B cell (primary cell): ENCODE measurements at regions of chr11 and their contacts with region 1.

Region 1: GRCh38 chr11:61071208-61071681 is 31.0 kb upstream of the CD5 start:
- DNase-seq: peak; percentile 61
- ATAC-seq: peak; percentile 50
- H3K4me3 ChIP-seq: peak overlapping the region in 1 of 5 experiments; percentile 15
- H3K4me3 Mint-ChIP-seq: peak overlapping the region; percentile 68
- H3K27ac ChIP-seq: peak overlapping the region; percentile 91 to 98
- H3K27ac Mint-ChIP-seq: peak overlapping the region; percentile 97
- H3K4me1 ChIP-seq: peaks cover 40 to 49% of the 10 kb centered on the region in 2 donors
- H3K4me1 Mint-ChIP-seq: peaks cover 71% of the 10 kb centered on the region
- H3K27me3 ChIP-seq: no peaks in the 10 kb centered on the region
- H3K27me3 Mint-ChIP-seq: no peaks in the 10 kb centered on the region
- CTCF ChIP-seq: no peak

Region 2: DNA sequence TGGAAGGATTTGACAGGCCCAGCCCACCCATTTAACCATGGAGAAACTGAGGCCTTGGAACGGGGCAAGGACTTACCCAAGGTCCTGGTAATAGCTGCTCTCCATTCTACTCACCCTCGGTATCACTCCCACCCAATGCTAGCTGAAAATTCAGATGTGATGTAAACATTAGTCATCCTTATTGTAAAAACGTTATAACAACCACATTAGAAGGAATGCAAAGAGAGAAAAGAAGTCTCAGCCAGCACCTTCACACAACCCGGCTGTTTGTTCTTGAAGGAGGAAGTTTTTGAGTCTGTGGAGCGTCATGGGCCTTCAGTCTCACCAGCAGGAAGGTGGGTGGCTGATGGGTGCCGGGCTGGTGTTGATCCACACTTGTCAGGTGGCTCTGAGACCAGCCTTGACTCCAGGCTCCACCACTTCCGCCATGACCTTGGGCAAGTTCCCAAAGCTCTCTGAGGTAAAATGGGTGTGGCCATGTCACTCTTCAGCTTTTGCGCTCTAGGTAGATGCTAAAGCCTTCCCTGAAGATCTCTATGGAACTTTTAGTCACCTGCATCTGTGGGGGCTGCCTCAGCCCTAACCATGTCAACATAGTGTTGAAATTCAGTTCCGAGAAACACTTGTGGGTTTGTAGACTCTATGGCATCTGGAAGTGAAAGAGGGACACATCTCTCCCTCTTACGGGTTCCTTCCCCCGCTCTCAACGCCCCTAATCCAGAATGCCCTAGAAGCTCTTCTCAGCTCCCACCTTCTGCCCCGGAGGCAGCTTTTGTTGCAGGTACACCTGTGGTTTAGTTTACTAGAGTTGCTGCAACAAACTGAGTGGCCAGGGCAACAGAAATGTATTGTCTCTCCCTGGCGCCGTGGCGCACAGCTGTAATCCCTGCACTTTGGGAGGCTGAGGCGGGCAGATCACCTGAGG is 85.0 kb before region 1 on chr11:
- CTCF ChIA-PET with region 1: no interaction called
- POLR2A ChIA-PET with region 1: no interaction called
- intact Hi-C with region 1: no loop called
- DNase-seq: peak; percentile 65
- ATAC-seq: peak; percentile 63
- H3K4me3 ChIP-seq: peak overlapping the region in 1 of 5 experiments; percentile 3
- H3K4me3 Mint-ChIP-seq: peak overlapping the region; percentile 21
- H3K27ac ChIP-seq: peak overlapping the region; percentile 61 to 71
- H3K27ac Mint-ChIP-seq: peak overlapping the region; percentile 86
- H3K4me1 ChIP-seq: peaks cover 23 to 42% of the 10 kb centered on the region in 2 donors
- H3K4me1 Mint-ChIP-seq: peaks cover 42% of the 10 kb centered on the region
- H3K27me3 ChIP-seq: no peaks in the 10 kb centered on the region
- H3K27me3 Mint-ChIP-seq: no peaks in the 10 kb centered on the region
- CTCF ChIP-seq: no peak

Region 3: DNA sequence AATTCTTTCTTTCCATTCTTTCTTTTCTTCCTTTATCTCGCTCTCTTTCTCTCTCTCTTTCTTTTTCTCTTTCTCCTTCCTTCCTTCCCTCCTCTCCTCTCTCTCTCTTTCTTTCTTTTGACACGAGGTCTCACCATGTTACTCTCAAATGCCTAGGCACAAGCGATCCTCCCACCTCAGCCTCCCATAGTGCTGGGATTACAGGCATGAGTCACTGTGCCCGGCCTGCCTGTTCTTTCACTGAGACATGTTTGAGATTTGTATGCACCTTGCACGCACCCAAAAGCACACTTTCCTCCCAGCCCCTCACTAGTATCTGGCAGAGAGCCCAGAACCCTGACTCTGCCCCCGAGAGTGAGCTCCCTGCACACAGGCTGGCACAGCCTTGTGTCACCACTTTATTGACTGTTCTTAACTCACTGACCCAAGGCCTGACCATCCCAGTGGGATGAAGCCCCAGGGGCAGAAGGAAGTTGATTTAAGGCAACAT is 42.9 kb before region 1 on chr11:
- CTCF ChIA-PET with region 1: interaction called, 3 read pairs
- POLR2A ChIA-PET with region 1: no interaction called
- intact Hi-C with region 1: loop called (anchors 1 kb)
- DNase-seq: peak; percentile 62
- ATAC-seq: peak; percentile 88
- H3K4me3 ChIP-seq: no peak overlapping the region
- H3K4me3 Mint-ChIP-seq: peak overlapping the region; percentile 67
- H3K27ac ChIP-seq: no peak overlapping the region
- H3K27ac Mint-ChIP-seq: peak overlapping the region; percentile 76
- H3K4me1 ChIP-seq: peaks cover 40 to 45% of the 10 kb centered on the region in 2 donors
- H3K4me1 Mint-ChIP-seq: peaks cover 48% of the 10 kb centered on the region
- H3K27me3 ChIP-seq: no peaks in the 10 kb centered on the region
- H3K27me3 Mint-ChIP-seq: no peaks in the 10 kb centered on the region
- CTCF ChIP-seq: no peak

Region 4: DNA sequence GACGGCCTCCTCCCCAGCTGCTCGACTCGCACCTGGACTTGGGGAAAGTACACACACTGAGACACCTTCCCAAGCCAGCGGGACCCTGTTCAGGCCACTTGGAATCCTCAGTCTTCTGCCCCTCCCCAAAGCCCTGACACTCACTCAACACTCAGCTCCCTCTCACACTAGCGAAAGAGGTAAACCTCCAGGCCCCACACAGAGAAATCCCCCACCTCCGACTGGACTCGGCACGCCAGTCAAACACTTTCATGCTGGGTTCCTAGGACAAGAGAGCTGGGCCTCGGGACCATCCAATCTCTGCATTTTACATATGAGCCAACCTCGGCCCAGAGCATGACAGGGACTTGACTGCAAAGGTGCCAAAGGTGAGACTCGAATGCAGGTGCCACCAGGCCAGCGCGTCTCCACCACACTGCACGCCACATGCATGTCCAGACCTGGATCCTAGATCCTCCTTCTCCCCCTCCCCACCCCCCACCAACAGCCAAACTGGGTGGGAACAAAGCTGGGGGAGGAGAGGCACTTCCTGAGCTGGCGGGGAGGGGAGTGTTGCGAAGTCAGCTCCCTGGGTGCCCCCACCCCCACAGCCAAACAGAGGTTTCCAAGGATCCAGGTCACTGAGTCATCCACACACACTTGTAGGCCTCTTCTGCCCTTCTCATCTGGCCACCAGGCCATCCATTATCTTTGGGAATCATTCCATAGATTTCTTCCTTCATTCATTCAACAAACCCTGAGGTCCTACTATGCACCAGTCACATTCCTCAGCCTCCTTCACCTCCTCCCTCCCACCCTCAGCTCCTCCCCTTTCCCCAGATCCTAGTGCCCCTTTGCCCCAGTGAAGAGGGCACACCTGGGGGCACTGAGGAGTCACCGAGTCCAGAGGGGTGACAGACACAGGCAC is 20.4 kb after region 1 on chr11:
- CTCF ChIA-PET with region 1: interaction called, 5 read pairs
- POLR2A ChIA-PET with region 1: interaction called, 4 read pairs
- intact Hi-C with region 1: loop called (anchors 1 kb)
- DNase-seq: peak; percentile 11
- ATAC-seq: peak; percentile 11
- H3K4me3 ChIP-seq: no peak overlapping the region
- H3K4me3 Mint-ChIP-seq: peak overlapping the region; percentile 65
- H3K27ac ChIP-seq: peak overlapping the region; percentile 26 to 69
- H3K27ac Mint-ChIP-seq: peak overlapping the region; percentile 95
- H3K4me1 ChIP-seq: peaks cover 47 to 56% of the 10 kb centered on the region in 2 donors
- H3K4me1 Mint-ChIP-seq: peaks cover 72% of the 10 kb centered on the region
- H3K27me3 ChIP-seq: no peaks in the 10 kb centered on the region
- H3K27me3 Mint-ChIP-seq: no peaks in the 10 kb centered on the region
- CTCF ChIP-seq: no peak

Region 5: GRCh38 chr11:61108847-61109585 is 37.8 kb after region 1 on chr11:
- CTCF ChIA-PET with region 1: no interaction called
- POLR2A ChIA-PET with region 1: no interaction called
- intact Hi-C with region 1: no loop called
- DNase-seq: no peak
- ATAC-seq: no peak
- H3K4me3 ChIP-seq: no peak overlapping the region
- H3K4me3 Mint-ChIP-seq: no peak overlapping the region
- H3K27ac ChIP-seq: no peak overlapping the region
- H3K27ac Mint-ChIP-seq: no peak overlapping the region
- H3K4me1 ChIP-seq: peaks cover under 1 to 8% of the 10 kb centered on the region in 2 donors
- H3K4me1 Mint-ChIP-seq: peaks cover 6% of the 10 kb centered on the region
- H3K27me3 ChIP-seq: no peaks in the 10 kb centered on the region
- H3K27me3 Mint-ChIP-seq: no peaks in the 10 kb centered on the region
- CTCF ChIP-seq: no peak

Region 6: GRCh38 chr11:61129639-61130523 is 58.6 kb after region 1 on chr11:
- CTCF ChIA-PET with region 1: interaction called, 26 read pairs
- POLR2A ChIA-PET with region 1: no interaction called
- intact Hi-C with region 1: loop called (anchors 2 kb)
- DNase-seq: peak; percentile 90
- ATAC-seq: peak; percentile 100
- H3K4me3 ChIP-seq: no peak overlapping the region
- H3K4me3 Mint-ChIP-seq: no peak overlapping the region
- H3K27ac ChIP-seq: no peak overlapping the region
- H3K27ac Mint-ChIP-seq: no peak overlapping the region
- H3K4me1 ChIP-seq: peaks cover 9% of the 10 kb centered on the region in 2 donors
- H3K4me1 Mint-ChIP-seq: peaks cover 4% of the 10 kb centered on the region
- H3K27me3 ChIP-seq: no peaks in the 10 kb centered on the region
- H3K27me3 Mint-ChIP-seq: no peaks in the 10 kb centered on the region
- CTCF ChIP-seq: peak; percentile 100